Dendritic cell treated with granulocyte-macrophage colony-stimulating factor and Interleukin-4, amounts not matched to agents 40 ng/mL and 50 ng/mL, for 4 days (primary cell): ENCODE measurements at regions of chr15 and their contacts with region 1.

Region 1: GRCh38 chr15:45641374-45641781 is 6.5 kb downstream of the SQOR start:
- H3K4me3 Mint-ChIP-seq: no peak overlapping the region
- H3K27ac Mint-ChIP-seq: peak overlapping the region; percentile 61
- H3K4me1 Mint-ChIP-seq: peaks cover 93% of the 10 kb centered on the region
- H3K27me3 Mint-ChIP-seq: no peaks in the 10 kb centered on the region

Region 2: DNA sequence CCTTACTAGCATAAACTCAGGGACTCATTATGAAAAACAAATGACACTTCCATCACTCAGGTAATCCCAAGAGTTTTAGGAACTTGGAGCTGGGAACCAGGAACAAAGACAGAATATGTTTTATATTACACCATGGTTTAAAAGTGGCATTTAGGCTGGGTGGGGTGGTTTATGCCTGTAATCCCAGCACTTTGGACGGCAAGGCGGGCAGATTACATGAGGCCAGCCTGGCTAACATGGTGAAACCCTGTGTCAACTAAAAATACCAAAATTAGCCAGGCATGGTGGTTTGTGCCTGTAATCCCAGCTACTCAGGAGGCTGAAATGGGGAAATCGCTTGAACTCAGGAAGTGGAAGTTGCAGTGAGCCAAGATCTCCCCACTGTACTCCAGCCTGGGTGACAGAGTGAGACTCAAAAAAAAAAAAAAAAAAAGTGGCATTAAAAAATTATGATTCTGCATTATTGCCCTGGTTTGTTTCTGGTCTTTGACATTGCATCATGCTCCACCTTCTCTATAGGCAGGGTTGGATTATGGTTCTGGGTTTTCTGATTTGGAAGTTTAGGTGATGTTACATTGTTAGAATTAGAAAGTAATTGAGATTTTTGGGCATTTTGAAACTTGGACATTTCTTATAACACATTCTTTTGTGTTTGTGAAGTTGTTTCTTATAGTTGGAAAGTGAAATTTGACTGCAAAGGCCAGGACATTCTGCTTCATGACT is 12.5 kb after region 1 on chr15:
- intact Hi-C with region 1: loop called (anchors 2 kb)
- H3K4me3 Mint-ChIP-seq: peak overlapping the region; percentile 14
- H3K27ac Mint-ChIP-seq: peak overlapping the region; percentile 81
- H3K4me1 Mint-ChIP-seq: peaks cover 74% of the 10 kb centered on the region
- H3K27me3 Mint-ChIP-seq: no peaks in the 10 kb centered on the region